Activated CD4-positive, alpha-beta memory T cell treated with anti-CD3 and anti-CD28 coated beads for 36 hours (primary cell): ENCODE measurements at regions of chr6 and their contacts with region 1.

Region 1: GRCh38 chr6:135535989-135536414 is 38.5 kb upstream of the AHI1 start:
- DNase-seq: no peak
- H3K4me3 Mint-ChIP-seq: no peak overlapping the region
- H3K27ac Mint-ChIP-seq: no peak overlapping the region
- H3K4me1 Mint-ChIP-seq: peaks cover 14% of the 10 kb centered on the region
- H3K27me3 Mint-ChIP-seq: peaks cover 2% of the 10 kb centered on the region

Region 2: DNA sequence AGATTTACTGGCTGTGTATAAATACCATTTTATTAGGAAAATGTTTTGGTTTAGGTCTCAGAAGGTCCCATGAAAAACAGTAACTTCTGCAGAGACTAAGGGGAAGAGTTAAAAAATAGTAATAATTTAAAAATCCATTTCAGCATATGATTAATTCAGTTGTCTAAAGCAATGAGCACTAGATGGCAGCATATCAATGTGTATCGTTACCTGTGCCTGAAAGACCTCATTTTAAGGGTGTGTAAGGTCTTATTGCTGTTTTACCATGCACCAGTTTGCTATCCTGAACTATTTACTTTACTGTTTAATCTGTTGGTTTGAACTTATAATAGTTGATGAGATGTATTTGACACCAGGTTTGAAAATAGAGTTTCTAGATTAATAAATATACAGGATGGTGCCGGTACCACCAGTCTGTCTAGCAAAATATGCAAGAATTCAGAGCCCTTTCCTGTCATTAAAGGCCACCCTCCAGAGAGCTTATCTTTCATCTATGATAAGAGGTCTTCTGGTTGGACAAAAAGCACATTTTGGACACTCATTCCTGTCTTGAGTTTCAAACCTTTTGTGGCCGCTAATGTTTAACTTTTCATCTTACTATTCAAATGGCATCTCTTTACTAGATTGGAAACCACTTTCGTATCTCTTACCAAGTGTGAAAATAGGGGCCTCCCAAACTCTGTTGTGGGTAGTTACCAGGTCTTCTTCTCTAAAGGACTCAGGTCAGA is 29.6 kb before region 1 on chr6:
- CTCF ChIA-PET with region 1: interaction called, 10 read pairs
- POLR2A ChIA-PET with region 1: no interaction called
- intact Hi-C with region 1: loop called (anchors 1 kb)
- DNase-seq: no peak
- H3K4me3 Mint-ChIP-seq: no peak overlapping the region
- H3K27ac Mint-ChIP-seq: no peak overlapping the region
- H3K4me1 Mint-ChIP-seq: peaks cover 6% of the 10 kb centered on the region
- H3K27me3 Mint-ChIP-seq: peaks cover under 1% of the 10 kb centered on the region

Region 3: GRCh38 chr6:135624402-135625295 is 88.6 kb after region 1 on chr6:
- CTCF ChIA-PET with region 1: interaction called, 7 read pairs
- POLR2A ChIA-PET with region 1: no interaction called
- intact Hi-C with region 1: loop called (anchors 1 kb)
- DNase-seq: no peak
- H3K4me3 Mint-ChIP-seq: no peak overlapping the region
- H3K27ac Mint-ChIP-seq: no peak overlapping the region
- H3K4me1 Mint-ChIP-seq: peaks cover 14% of the 10 kb centered on the region
- H3K27me3 Mint-ChIP-seq: peaks cover 6% of the 10 kb centered on the region

Region 4: GRCh38 chr6:135759831-135760230 is 223.8 kb after region 1 on chr6:
- CTCF ChIA-PET with region 1: interaction called, 6 read pairs
- POLR2A ChIA-PET with region 1: no interaction called
- intact Hi-C with region 1: loop called (anchors 2 kb)
- DNase-seq: no peak
- H3K4me3 Mint-ChIP-seq: no peak overlapping the region
- H3K27ac Mint-ChIP-seq: no peak overlapping the region
- H3K4me1 Mint-ChIP-seq: no peaks in the 10 kb centered on the region
- H3K27me3 Mint-ChIP-seq: no peaks in the 10 kb centered on the region

Region 5: GRCh38 chr6:136191606-136192312 is 655.8 kb after region 1 on chr6:
- CTCF ChIA-PET with region 1: no interaction called
- POLR2A ChIA-PET with region 1: no interaction called
- intact Hi-C with region 1: no loop called
- DNase-seq: no peak
- H3K4me3 Mint-ChIP-seq: no peak overlapping the region
- H3K27ac Mint-ChIP-seq: no peak overlapping the region
- H3K4me1 Mint-ChIP-seq: no peaks in the 10 kb centered on the region
- H3K27me3 Mint-ChIP-seq: peaks cover 6% of the 10 kb centered on the region

Region 6: DNA sequence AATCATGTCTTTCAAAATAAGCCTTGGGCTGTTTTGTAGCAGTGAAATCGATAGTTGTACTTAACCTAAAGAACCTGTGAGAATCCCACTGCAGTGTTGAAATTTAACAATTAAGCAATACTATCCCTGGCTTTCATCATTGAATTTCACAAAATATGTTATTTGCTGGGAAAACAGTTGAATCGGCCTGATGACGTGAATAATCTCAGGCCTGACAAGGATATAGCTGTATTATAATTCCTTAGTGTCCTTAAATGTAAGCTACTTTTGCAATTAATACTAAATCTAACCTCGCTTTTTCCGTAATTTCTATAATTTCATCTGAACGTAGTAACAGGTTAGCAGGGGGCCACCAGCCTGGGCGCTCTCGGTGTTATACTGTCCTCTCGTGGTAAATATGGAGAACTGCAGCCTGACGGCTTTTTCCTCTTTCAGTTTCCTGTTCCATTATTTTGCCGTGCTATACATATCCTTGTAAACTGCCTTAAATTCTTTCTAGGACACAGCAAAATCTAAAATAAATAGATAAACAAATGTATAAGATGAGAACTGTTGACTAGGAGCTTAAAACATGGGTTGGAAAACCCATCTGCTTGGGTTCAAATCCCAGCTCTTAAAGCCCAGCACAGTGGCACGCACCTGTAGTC is 690.1 kb after region 1 on chr6:
- CTCF ChIA-PET with region 1: interaction called, 40 read pairs
- POLR2A ChIA-PET with region 1: no interaction called
- intact Hi-C with region 1: loop called (anchors 1 kb)
- DNase-seq: peak; percentile 59
- H3K4me3 Mint-ChIP-seq: no peak overlapping the region
- H3K27ac Mint-ChIP-seq: no peak overlapping the region
- H3K4me1 Mint-ChIP-seq: peaks cover 4% of the 10 kb centered on the region
- H3K27me3 Mint-ChIP-seq: no peaks in the 10 kb centered on the region